Caco-2 (cell line): ENCODE measurements at regions of chr5 and their contacts with region 1.

Region 1: GRCh38 chr5:157624144-157624543 is 28.1 kb downstream of the SOX30 start:
- DNase-seq: peak; percentile 51 to 63
- H3K4me3 ChIP-seq: peak overlapping the region; percentile 16
- H3K4me3 Mint-ChIP-seq: peak overlapping the region; percentile 63
- H3K27ac Mint-ChIP-seq: peak overlapping the region; percentile 71
- H3K4me1 ChIP-seq: peaks cover 20% of the 10 kb centered on the region
- H3K4me1 Mint-ChIP-seq: peaks cover 32% of the 10 kb centered on the region
- H3K27me3 ChIP-seq: no peaks in the 10 kb centered on the region
- H3K27me3 Mint-ChIP-seq: no peaks in the 10 kb centered on the region
- CTCF ChIP-seq: no peak

Region 2: GRCh38 chr5:157342822-157343402 is 281.2 kb before region 1 on chr5:
- CTCF ChIA-PET with region 1: no interaction called
- POLR2A ChIA-PET with region 1: no interaction called
- intact Hi-C with region 1: no loop called
- DNase-seq: peak in 1 of 2 experiments; percentile 49
- H3K4me3 ChIP-seq: no peak overlapping the region
- H3K4me3 Mint-ChIP-seq: no peak overlapping the region
- H3K27ac Mint-ChIP-seq: no peak overlapping the region
- H3K4me1 ChIP-seq: no peaks in the 10 kb centered on the region
- H3K4me1 Mint-ChIP-seq: no peaks in the 10 kb centered on the region
- H3K27me3 ChIP-seq: no peaks in the 10 kb centered on the region
- H3K27me3 Mint-ChIP-seq: peaks cover 6% of the 10 kb centered on the region
- CTCF ChIP-seq: peak; percentile 33 to 64

Region 3: DNA sequence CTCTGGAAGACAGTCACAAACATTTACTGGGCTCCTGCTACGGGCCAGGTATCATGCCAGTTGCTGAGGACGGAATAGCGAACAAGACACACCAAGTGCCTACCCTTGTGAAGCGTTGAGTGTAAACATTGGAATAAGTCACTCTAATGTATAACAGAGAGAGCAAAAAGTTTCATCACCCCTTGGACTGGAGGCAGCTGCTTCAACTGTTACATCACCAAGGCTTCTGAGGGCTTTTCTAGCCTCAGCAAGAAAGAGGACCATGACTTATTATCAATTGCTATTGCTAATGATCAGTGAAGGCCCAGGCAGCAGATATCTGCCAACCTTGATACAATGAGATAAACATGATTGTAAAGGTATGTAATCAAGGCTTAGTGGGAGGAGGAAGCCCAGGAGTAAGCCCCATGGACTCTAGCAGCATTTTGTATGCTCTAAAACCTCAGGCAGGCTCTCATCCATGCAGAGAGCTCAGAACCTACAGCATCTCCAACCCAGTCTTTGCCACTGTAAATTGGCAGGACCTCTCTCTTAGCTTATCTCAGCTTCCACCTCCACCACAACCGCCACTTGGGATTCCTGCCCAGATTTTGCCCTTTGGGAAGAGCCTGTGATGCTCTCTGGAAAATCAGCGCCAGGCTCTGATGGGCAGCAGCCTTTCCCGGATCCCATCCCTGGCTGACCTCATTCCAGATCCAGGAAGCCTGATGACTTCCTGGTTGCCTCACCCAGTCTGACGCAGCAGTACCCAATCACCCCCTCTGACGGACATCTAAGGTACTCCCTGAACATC is 103.0 kb before region 1 on chr5:
- CTCF ChIA-PET with region 1: no interaction called
- POLR2A ChIA-PET with region 1: no interaction called
- intact Hi-C with region 1: no loop called
- DNase-seq: no peak
- H3K4me3 ChIP-seq: no peak overlapping the region
- H3K4me3 Mint-ChIP-seq: no peak overlapping the region
- H3K27ac Mint-ChIP-seq: peak overlapping the region; percentile 72
- H3K4me1 ChIP-seq: no peaks in the 10 kb centered on the region
- H3K4me1 Mint-ChIP-seq: no peaks in the 10 kb centered on the region
- H3K27me3 ChIP-seq: no peaks in the 10 kb centered on the region
- H3K27me3 Mint-ChIP-seq: no peaks in the 10 kb centered on the region
- CTCF ChIP-seq: no peak

Region 4: DNA sequence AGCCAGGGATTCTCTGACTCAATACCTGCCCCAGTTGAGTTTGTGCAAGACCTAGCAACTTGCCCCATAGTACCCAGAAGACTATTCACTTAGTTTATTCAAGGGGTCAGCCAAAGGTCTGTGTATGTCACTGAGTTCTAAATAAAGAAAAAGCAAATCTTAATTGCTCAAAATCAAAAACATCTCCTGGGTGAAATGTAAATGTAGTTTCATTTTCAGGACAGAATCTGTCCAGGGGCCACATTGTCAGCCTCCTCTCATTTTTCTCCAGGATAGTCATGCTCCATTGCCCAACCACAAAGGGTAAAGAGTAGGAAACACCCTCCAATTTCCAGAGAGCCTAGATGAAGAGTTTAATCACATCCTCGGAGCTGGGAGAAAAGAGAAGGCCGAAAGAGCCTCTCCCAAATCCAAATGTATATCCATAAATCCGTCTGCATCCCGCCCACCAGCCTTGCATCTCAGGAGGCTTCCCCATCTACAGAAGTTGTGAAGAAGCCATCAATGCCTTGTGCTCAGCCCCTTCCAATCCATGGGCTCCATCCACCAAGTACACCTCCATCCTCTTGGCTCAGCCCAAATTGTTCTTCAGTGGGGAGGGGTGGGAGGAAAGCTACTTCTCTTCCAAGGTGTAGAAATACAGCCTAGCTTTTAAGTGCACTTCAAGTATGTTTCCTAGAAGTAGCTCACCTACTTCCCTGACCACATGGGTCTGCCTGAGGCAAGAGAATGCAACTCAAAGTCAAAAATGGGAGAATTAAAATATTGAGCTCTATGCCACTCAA is 75.4 kb before region 1 on chr5:
- CTCF ChIA-PET with region 1: no interaction called
- POLR2A ChIA-PET with region 1: no interaction called
- intact Hi-C with region 1: loop called (anchors 5 kb)
- DNase-seq: no peak
- H3K4me3 ChIP-seq: no peak overlapping the region
- H3K4me3 Mint-ChIP-seq: peak overlapping the region; percentile 50
- H3K27ac Mint-ChIP-seq: peak overlapping the region; percentile 83
- H3K4me1 ChIP-seq: peaks cover 62% of the 10 kb centered on the region
- H3K4me1 Mint-ChIP-seq: peaks cover 65% of the 10 kb centered on the region
- H3K27me3 ChIP-seq: no peaks in the 10 kb centered on the region
- H3K27me3 Mint-ChIP-seq: no peaks in the 10 kb centered on the region
- CTCF ChIP-seq: no peak

Region 5: GRCh38 chr5:157592594-157592993 is 31.6 kb before region 1 on chr5:
- CTCF ChIA-PET with region 1: no interaction called
- POLR2A ChIA-PET with region 1: no interaction called
- intact Hi-C with region 1: loop called (anchors 1 kb)
- DNase-seq: no peak
- H3K4me3 ChIP-seq: no peak overlapping the region
- H3K4me3 Mint-ChIP-seq: no peak overlapping the region
- H3K27ac Mint-ChIP-seq: no peak overlapping the region
- H3K4me1 ChIP-seq: peaks cover 39% of the 10 kb centered on the region
- H3K4me1 Mint-ChIP-seq: peaks cover 28% of the 10 kb centered on the region
- H3K27me3 ChIP-seq: no peaks in the 10 kb centered on the region
- H3K27me3 Mint-ChIP-seq: no peaks in the 10 kb centered on the region
- CTCF ChIP-seq: no peak

Region 6: GRCh38 chr5:157603333-157604190 is 20.6 kb before region 1 on chr5:
- CTCF ChIA-PET with region 1: no interaction called
- POLR2A ChIA-PET with region 1: no interaction called
- intact Hi-C with region 1: no loop called
- DNase-seq: no peak
- H3K4me3 ChIP-seq: no peak overlapping the region
- H3K4me3 Mint-ChIP-seq: no peak overlapping the region
- H3K27ac Mint-ChIP-seq: no peak overlapping the region
- H3K4me1 ChIP-seq: peaks cover 7% of the 10 kb centered on the region; the same call in 1 of the 2 replicates
- H3K4me1 Mint-ChIP-seq: peaks cover 11% of the 10 kb centered on the region
- H3K27me3 ChIP-seq: no peaks in the 10 kb centered on the region
- H3K27me3 Mint-ChIP-seq: no peaks in the 10 kb centered on the region
- CTCF ChIP-seq: no peak

Region 7: GRCh38 chr5:157613385-157614245 is 10.5 kb before region 1 on chr5:
- CTCF ChIA-PET with region 1: interaction called, 4 read pairs
- POLR2A ChIA-PET with region 1: interaction called, 4 read pairs
- intact Hi-C with region 1: loop called (anchors 1 kb)
- DNase-seq: peak in 1 of 2 experiments; percentile 26
- H3K4me3 ChIP-seq: no peak overlapping the region
- H3K4me3 Mint-ChIP-seq: peak overlapping the region; percentile 40
- H3K27ac Mint-ChIP-seq: peak overlapping the region; percentile 85
- H3K4me1 ChIP-seq: peaks cover 35% of the 10 kb centered on the region
- H3K4me1 Mint-ChIP-seq: peaks cover 30% of the 10 kb centered on the region
- H3K27me3 ChIP-seq: no peaks in the 10 kb centered on the region
- H3K27me3 Mint-ChIP-seq: no peaks in the 10 kb centered on the region
- CTCF ChIP-seq: no peak